ENCODE measurements at regions of chr1 and their contacts with region 1.

Region 1: GRCh38 chr1:93078986-93079654 is at the start of gene MTF2:
- DNase-seq: peak; percentile 95
- ATAC-seq: peak; percentile 92
- H3K4me3 ChIP-seq: peak within 1 kb of the TSS; percentile 85 to 98 (median 89)
- H3K4me3 Mint-ChIP-seq: peak within 1 kb of the TSS; percentile 100
- H3K27ac ChIP-seq: peak within 1 kb of the TSS; percentile 80 to 87
- H3K27ac Mint-ChIP-seq: peak within 1 kb of the TSS; percentile 99
- H3K4me1 ChIP-seq: peaks cover 24 to 30% of the 10 kb centered on the region in 2 donors
- H3K4me1 Mint-ChIP-seq: peaks cover 46% of the 10 kb centered on the region
- H3K27me3 ChIP-seq: no peaks in the 10 kb centered on the region
- H3K27me3 Mint-ChIP-seq: no peaks in the 10 kb centered on the region
- CTCF ChIP-seq: no peak
- total RNA-seq, gene MTF2: 66.2 and 68.6 TPM in 2 replicates

Region 2: DNA sequence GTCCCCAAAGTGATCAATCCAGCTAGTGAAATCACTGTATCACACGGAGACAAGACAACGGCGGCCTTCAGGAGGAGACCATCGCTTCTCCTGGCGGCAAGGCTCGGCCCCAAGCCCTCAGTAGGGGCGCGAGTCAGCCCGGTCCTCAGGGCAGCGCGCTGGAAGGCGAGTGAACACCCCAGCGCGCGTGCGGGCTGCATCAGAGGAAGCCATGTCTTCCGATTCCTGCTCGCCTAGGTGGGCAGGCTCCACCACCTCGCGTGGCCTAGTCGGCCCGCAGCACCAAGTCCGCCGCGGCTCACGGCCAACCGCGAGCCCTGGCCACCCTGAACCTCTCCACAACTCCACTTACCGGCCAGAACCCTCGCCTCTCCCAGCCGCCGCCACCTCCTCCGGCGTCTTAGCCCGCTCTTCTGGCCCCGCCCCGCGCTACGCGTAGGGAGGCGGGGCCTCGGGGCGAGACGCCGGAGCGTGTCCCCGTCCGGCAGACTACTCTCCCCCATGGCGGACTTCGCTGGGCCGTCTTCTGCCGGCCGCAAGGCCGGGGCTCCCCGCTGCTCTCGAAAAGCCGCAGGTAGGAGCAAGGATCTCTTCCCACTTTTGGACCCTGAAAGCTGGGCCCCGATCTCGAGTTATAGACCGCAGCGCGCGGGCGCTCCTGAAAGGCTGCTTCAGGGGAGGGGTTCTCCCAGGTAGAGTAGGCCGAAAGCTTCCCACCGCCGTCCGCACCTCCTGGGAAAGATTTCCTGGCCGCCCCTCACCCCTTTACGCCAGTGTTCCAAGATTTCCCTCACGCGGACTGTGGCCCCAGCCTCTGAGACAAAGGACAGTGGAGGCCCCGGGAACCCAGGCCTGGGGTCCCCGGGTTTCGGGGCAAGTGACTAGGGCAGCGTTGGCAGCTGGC is 780.3 kb before region 1 on chr1 and contains the starts of genes GLMN and RPAP2:
- CTCF ChIA-PET with region 1: no interaction called
- POLR2A ChIA-PET with region 1: no interaction called
- intact Hi-C with region 1: loop called (anchors 2 kb)
- DNase-seq: peak; percentile 90
- ATAC-seq: peak; percentile 95
- H3K4me3 ChIP-seq: peak within 1 kb of the TSS; percentile 58 to 94 (median 90)
- H3K4me3 Mint-ChIP-seq: peak within 1 kb of the TSS; percentile 100
- H3K27ac ChIP-seq: peak within 1 kb of the TSS; percentile 92 to 95
- H3K27ac Mint-ChIP-seq: peak within 1 kb of the TSS; percentile 98
- H3K4me1 ChIP-seq: peaks cover 9 to 17% of the 10 kb centered on the region in 2 donors
- H3K4me1 Mint-ChIP-seq: peaks cover 27% of the 10 kb centered on the region
- H3K27me3 ChIP-seq: no peaks in the 10 kb centered on the region
- H3K27me3 Mint-ChIP-seq: no peaks in the 10 kb centered on the region
- CTCF ChIP-seq: peak; percentile 20
- total RNA-seq, gene GLMN: 13.6 and 15.7 TPM in 2 replicates
- total RNA-seq, gene RPAP2: 31.6 and 33.8 TPM in 2 replicates

Region 3: DNA sequence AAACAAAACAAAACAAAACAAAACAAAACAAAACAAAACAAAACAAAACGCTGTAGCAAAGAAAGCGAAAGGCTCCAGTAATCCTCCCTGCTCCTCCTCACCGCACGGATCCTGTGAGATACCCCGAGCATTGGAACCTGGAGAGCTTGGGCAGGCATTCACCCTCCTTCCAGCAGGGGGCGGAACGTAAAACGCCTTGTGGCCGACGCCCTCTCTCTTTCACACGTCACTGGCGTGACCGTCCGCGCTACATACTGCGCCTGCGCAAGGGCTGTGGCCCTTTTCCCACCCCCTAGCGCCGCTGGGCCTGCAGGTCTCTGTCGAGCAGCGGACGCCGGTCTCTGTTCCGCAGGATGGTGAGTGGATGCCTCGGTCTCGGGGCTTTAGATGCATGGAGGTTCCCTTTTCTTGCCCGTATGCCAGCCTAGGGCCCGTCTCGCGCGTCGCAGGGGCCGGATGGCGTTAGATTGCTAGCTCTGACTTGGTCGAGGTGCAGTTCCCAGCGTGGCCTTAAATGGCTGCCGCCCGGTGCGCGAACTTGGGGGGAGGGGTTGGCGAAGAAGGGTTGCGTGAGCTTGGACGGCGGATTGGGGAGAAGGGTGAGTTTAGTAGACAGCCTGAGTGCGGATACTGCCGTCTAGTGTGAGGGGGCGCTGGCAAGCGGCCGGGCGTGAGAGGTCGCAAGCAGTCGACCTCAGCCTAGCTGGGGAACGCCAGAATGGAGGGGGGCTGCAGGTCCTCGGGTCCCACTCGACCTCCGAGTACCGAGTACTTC is 247.2 kb before region 1 on chr1 and contains the start of gene RPL5:
- CTCF ChIA-PET with region 1: interaction called, 12 read pairs
- POLR2A ChIA-PET with region 1: interaction called, 5 read pairs
- intact Hi-C with region 1: loop called (anchors 2 kb)
- DNase-seq: peak; percentile 100
- ATAC-seq: peak; percentile 88
- H3K4me3 ChIP-seq: peak within 1 kb of the TSS; percentile 84 to 98 (median 92)
- H3K4me3 Mint-ChIP-seq: peak within 1 kb of the TSS; percentile 100
- H3K27ac ChIP-seq: peak within 1 kb of the TSS; percentile 90 to 96
- H3K27ac Mint-ChIP-seq: peak within 1 kb of the TSS; percentile 100
- H3K4me1 ChIP-seq: peaks cover 25 to 28% of the 10 kb centered on the region in 2 donors
- H3K4me1 Mint-ChIP-seq: peaks cover 47% of the 10 kb centered on the region
- H3K27me3 ChIP-seq: no peaks in the 10 kb centered on the region
- H3K27me3 Mint-ChIP-seq: no peaks in the 10 kb centered on the region
- CTCF ChIP-seq: peak; percentile 89
- total RNA-seq, gene RPL5: 1,049 and 1,104 TPM in 2 replicates

Region 4: GRCh38 chr1:93051961-93052360 is 27.2 kb before region 1 on chr1:
- CTCF ChIA-PET with region 1: no interaction called
- POLR2A ChIA-PET with region 1: no interaction called
- intact Hi-C with region 1: no loop called
- DNase-seq: no peak
- ATAC-seq: no peak
- H3K4me3 ChIP-seq: no peak overlapping the region
- H3K4me3 Mint-ChIP-seq: no peak overlapping the region
- H3K27ac ChIP-seq: no peak overlapping the region
- H3K27ac Mint-ChIP-seq: no peak overlapping the region
- H3K4me1 ChIP-seq: no peaks in the 10 kb centered on the region
- H3K4me1 Mint-ChIP-seq: no peaks in the 10 kb centered on the region
- H3K27me3 ChIP-seq: no peaks in the 10 kb centered on the region
- H3K27me3 Mint-ChIP-seq: no peaks in the 10 kb centered on the region
- CTCF ChIP-seq: no peak

Region 5: DNA sequence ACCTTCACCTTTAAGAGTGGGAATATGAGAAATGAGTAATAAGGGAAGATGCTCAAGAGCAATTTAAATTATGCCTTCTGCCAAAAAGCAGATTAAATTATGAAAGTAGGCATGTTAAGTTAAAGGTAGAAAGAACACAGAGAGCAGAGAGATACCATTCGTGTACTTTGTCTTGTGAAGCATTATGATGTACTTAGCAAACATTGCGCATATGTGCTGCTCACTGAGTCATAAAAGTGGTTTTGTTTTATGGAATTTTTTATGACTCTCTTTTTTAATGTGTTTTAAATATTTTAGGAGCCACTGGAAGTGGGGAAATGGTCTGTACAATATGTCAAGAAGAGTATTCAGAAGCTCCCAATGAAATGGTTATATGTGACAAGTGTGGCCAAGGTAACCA is 35.3 kb after region 1 on chr1:
- CTCF ChIA-PET with region 1: interaction called, 9 read pairs
- POLR2A ChIA-PET with region 1: interaction called, 5 read pairs
- intact Hi-C with region 1: loop called (anchors 5 kb)
- DNase-seq: no peak
- ATAC-seq: no peak
- H3K4me3 ChIP-seq: no peak overlapping the region
- H3K4me3 Mint-ChIP-seq: no peak overlapping the region
- H3K27ac ChIP-seq: no peak overlapping the region
- H3K27ac Mint-ChIP-seq: no peak overlapping the region
- H3K4me1 ChIP-seq: peaks cover 0 to 15% of the 10 kb centered on the region in 2 donors
- H3K4me1 Mint-ChIP-seq: peaks cover 22% of the 10 kb centered on the region
- H3K27me3 ChIP-seq: no peaks in the 10 kb centered on the region
- H3K27me3 Mint-ChIP-seq: no peaks in the 10 kb centered on the region
- CTCF ChIP-seq: no peak

Region 6: GRCh38 chr1:93304716-93305138 is 225.6 kb after region 1 on chr1:
- CTCF ChIA-PET with region 1: interaction called, 30 read pairs
- POLR2A ChIA-PET with region 1: no interaction called
- intact Hi-C with region 1: no loop called
- DNase-seq: peak; percentile 73
- ATAC-seq: peak; percentile 53
- H3K4me3 ChIP-seq: no peak overlapping the region
- H3K4me3 Mint-ChIP-seq: no peak overlapping the region
- H3K27ac ChIP-seq: no peak overlapping the region
- H3K27ac Mint-ChIP-seq: no peak overlapping the region
- H3K4me1 ChIP-seq: no peaks in the 10 kb centered on the region
- H3K4me1 Mint-ChIP-seq: no peaks in the 10 kb centered on the region
- H3K27me3 ChIP-seq: no peaks in the 10 kb centered on the region
- H3K27me3 Mint-ChIP-seq: no peaks in the 10 kb centered on the region
- CTCF ChIP-seq: peak; percentile 88

Region 7: GRCh38 chr1:93909146-93910050 is 830.3 kb after region 1 on chr1 and contains the start of gene GCLM:
- CTCF ChIA-PET with region 1: no interaction called
- POLR2A ChIA-PET with region 1: no interaction called
- intact Hi-C with region 1: loop called (anchors 1 kb)
- DNase-seq: peak; percentile 94
- ATAC-seq: peak; percentile 93
- H3K4me3 ChIP-seq: peak within 1 kb of the TSS; percentile 60 to 98 (median 71)
- H3K4me3 Mint-ChIP-seq: peak within 1 kb of the TSS; percentile 89
- H3K27ac ChIP-seq: peak within 1 kb of the TSS; percentile 67 to 81
- H3K27ac Mint-ChIP-seq: peak within 1 kb of the TSS; percentile 84
- H3K4me1 ChIP-seq: peaks cover 17 to 21% of the 10 kb centered on the region in 2 donors
- H3K4me1 Mint-ChIP-seq: peaks cover 25% of the 10 kb centered on the region
- H3K27me3 ChIP-seq: no peaks in the 10 kb centered on the region
- H3K27me3 Mint-ChIP-seq: peaks cover 6% of the 10 kb centered on the region
- CTCF ChIP-seq: peak; percentile 94
- total RNA-seq, gene GCLM: 10.7 and 12.4 TPM in 2 replicates